Ovary (tissue), 10 donors: ENCODE measurements at regions of chr9 and their contacts with region 1.

Region 1: DNA sequence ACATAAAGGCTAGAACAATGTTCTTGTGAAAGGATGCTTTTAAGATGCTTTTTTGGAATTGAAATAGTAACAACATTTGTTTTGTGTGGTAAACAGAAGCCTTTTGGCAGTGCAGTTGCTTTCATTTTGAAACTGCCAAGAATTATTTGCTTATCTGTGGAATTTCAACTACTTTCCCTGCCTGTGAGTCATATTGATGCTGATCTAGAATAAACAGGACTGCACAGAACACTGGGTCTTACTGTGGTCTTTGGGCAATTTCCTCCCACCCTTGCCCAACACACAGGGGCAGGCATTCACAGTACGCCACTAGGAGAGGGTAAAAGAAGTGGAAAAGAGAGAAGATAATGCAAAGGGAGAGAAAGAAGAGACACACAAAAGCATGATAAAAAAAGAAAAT is 483.7 kb downstream of the ELAVL2 start:
- DNase-seq: no peak
- H3K4me3 ChIP-seq: no peak overlapping the region
- H3K27ac ChIP-seq: no peak overlapping the region
- H3K4me1 ChIP-seq: peaks cover 5% of the 10 kb centered on the region
- H3K27me3 ChIP-seq: no peaks in the 10 kb centered on the region
- CTCF ChIP-seq: no peak
- EP300 ChIP-seq: no peak
- POLR2A ChIP-seq: no peak

Region 2: GRCh38 chr9:22976454-22976853 is 365.8 kb before region 1 on chr9:
- intact Hi-C with region 1: loop called in 1 of 4 experiments (anchors 10 kb)
- DNase-seq: no peak
- H3K4me3 ChIP-seq: no peak overlapping the region
- H3K27ac ChIP-seq: no peak overlapping the region
- H3K4me1 ChIP-seq: no peaks in the 10 kb centered on the region
- H3K27me3 ChIP-seq: no peaks in the 10 kb centered on the region
- CTCF ChIP-seq: no peak
- EP300 ChIP-seq: no peak
- POLR2A ChIP-seq: no peak

Region 3: DNA sequence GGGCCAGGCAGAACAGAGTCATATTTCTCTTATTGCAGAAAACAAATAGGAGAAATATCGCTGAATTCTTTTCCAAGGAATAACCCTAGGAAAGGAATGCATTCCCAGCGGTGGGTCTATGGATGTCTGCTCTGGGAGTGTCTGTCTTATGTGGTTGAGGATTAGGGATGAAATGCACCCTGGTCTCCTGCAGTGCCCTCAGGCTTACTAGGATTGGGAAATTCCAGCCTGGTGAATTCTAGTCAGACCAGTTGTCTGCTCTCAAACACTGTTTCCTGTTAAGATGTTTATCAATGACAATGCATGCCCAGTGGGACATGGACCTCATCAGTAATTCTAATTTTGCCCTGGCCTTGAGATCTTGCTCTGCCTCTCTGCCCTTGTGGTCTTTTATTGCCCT is 619.8 kb after region 1 on chr9:
- intact Hi-C with region 1: loop called in 1 of 4 experiments (anchors 5 kb)
- DNase-seq: no peak
- H3K4me3 ChIP-seq: no peak overlapping the region
- H3K27ac ChIP-seq: no peak overlapping the region
- H3K4me1 ChIP-seq: no peaks in the 10 kb centered on the region
- H3K27me3 ChIP-seq: no peaks in the 10 kb centered on the region
- CTCF ChIP-seq: no peak
- EP300 ChIP-seq: no peak
- POLR2A ChIP-seq: no peak